SK-N-SH (cell line): ENCODE measurements at regions of chr11 and their contacts with region 1.

Region 1: DNA sequence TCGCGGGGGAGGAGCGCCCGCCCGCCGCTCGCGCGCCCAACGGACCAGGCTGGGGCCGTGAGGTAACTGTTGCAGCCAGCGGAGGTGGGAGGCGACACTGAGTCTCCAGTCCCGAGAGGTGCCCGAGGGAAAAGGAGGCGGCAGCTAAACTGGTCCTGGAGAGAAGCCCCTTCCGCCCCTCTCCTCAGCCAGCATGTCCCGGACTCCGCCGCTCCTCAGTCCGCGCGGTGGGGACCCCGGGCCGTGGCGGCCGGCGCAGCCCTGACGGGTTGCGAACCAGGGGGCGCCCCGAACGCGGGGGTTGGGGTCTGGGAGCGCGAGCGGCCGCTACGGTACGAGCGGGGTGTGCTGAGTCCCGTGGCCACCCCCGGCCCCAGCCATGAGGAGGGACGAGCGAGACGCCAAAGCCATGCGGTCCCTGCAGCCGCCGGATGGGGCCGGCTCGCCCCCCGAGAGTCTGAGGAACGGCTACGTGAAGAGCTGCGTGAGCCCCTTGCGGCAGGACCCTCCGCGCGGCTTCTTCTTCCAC is at the start of gene PDE3B:
- DNase-seq: peak; percentile 94
- H3K4me3 ChIP-seq: peak within 1 kb of the TSS; percentile 66 to 74
- H3K27ac ChIP-seq: peak within 1 kb of the TSS in 1 of 2 experiments; percentile 90; a peak in 2 of 4 replicates
- H3K4me1 ChIP-seq: peaks cover 0 to 19% of the 10 kb centered on the region in 2 experiments; a peak in 2 of 4 replicates
- H3K27me3 ChIP-seq: no peaks in the 10 kb centered on the region
- CTCF ChIP-seq: no peak; the same call in 1 of the 2 replicates
- EP300 ChIP-seq: no peak
- RAD21 ChIP-seq: no peak
- polyA plus RNA-seq, gene PDE3B: 0.26 and 0.50 TPM in 2 replicates

Region 2: DNA sequence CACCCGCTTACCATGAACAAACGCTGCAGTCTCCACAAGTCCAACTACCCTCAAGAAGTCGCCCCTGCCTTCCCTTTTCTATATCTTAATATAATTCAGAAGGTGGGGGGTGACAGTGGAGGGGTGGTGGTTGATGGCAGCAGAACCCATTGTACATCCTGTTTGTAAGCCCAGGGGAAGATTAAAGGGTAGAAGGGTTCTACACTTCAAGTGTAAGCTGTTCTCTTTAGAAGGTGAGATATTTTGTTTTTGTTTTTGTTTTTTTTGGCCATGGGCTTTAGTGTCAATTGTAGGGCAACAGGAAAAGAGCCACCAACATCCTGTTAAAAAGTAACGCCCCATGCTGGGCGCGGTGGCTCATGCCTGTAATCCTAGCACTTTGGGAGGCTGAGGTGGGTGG is 249.9 kb before region 1 on chr11:
- CTCF ChIA-PET with region 1: no interaction called
- POLR2A ChIA-PET with region 1: no interaction called
- DNase-seq: no peak
- H3K4me3 ChIP-seq: no peak overlapping the region
- H3K27ac ChIP-seq: no peak overlapping the region
- H3K4me1 ChIP-seq: no peaks in the 10 kb centered on the region
- H3K27me3 ChIP-seq: no peaks in the 10 kb centered on the region
- CTCF ChIP-seq: no peak
- EP300 ChIP-seq: no peak
- RAD21 ChIP-seq: no peak

Region 3: GRCh38 chr11:14537134-14537599 is 106.6 kb before region 1 on chr11:
- CTCF ChIA-PET with region 1: interaction called, 12 read pairs
- POLR2A ChIA-PET with region 1: no interaction called
- DNase-seq: peak; percentile 68
- H3K4me3 ChIP-seq: no peak overlapping the region; a peak in 1 of 4 replicates
- H3K27ac ChIP-seq: no peak overlapping the region
- H3K4me1 ChIP-seq: peaks cover 0 to 5% of the 10 kb centered on the region in 2 experiments; a peak in 1 of 4 replicates
- H3K27me3 ChIP-seq: no peaks in the 10 kb centered on the region
- CTCF ChIP-seq: peak; percentile 82
- EP300 ChIP-seq: no peak
- RAD21 ChIP-seq: peak; percentile 87

Region 4: GRCh38 chr11:14892036-14892567 is 248.3 kb after region 1 on chr11 and contains the start of gene CYP2R1:
- CTCF ChIA-PET with region 1: interaction called, 3 read pairs
- POLR2A ChIA-PET with region 1: interaction called, 13 read pairs
- DNase-seq: peak; percentile 96
- H3K4me3 ChIP-seq: peak within 1 kb of the TSS; percentile 75 to 88
- H3K27ac ChIP-seq: peak within 1 kb of the TSS; percentile 80 to 87
- H3K4me1 ChIP-seq: no peaks in the 10 kb centered on the region; a peak in 2 of 4 replicates
- H3K27me3 ChIP-seq: no peaks in the 10 kb centered on the region
- CTCF ChIP-seq: no peak
- EP300 ChIP-seq: no peak
- RAD21 ChIP-seq: no peak; the same call in 1 of the 2 replicates
- polyA plus RNA-seq, gene CYP2R1: 9.3 and 10.9 TPM in 2 replicates